Naive thymus-derived CD4-positive, alpha-beta T cell (primary cell): ENCODE measurements at regions of chr5 and their contacts with region 1.

Region 1: GRCh38 chr5:170434966-170435605 is 45.9 kb upstream of the KCNMB1 start:
- DNase-seq: peak; percentile 15 to 61 (median 40)
- ATAC-seq: peak; percentile 88
- H3K4me3 ChIP-seq: no peak overlapping the region
- H3K4me3 Mint-ChIP-seq: no peak overlapping the region
- H3K27ac ChIP-seq: no peak overlapping the region
- H3K27ac Mint-ChIP-seq: no peak overlapping the region
- H3K4me1 ChIP-seq: no peaks in the 10 kb centered on the region
- H3K4me1 Mint-ChIP-seq: no peaks in the 10 kb centered on the region
- H3K27me3 ChIP-seq: no peaks in the 10 kb centered on the region
- H3K27me3 Mint-ChIP-seq: peaks cover 0 to 6% (median 0%) of the 10 kb centered on the region in 5 donors

Region 2: DNA sequence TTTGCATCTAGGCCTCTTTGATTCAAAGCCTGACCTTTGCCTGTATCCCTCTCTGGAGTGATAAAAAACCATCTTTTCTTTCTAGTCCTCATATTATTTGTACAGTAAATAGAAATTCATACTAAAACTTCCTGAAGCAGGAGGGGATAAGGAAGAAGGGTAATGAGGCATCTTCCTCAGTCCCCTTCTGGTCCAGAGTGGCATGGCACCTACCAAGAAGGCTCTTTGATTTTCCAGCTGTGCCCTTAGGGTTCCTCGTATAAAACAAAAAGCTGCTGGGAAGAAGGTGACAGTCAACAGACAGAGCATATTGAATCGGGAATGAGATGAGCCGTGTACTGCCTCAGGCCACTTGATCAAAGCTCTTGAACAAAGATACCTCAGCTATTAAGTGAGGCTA is 923.4 kb before region 1 on chr5:
- CTCF ChIA-PET with region 1: no interaction called
- POLR2A ChIA-PET with region 1: no interaction called
- intact Hi-C with region 1: no loop called
- DNase-seq: no peak
- ATAC-seq: no peak
- H3K4me3 ChIP-seq: no peak overlapping the region
- H3K4me3 Mint-ChIP-seq: no peak overlapping the region
- H3K27ac ChIP-seq: no peak overlapping the region
- H3K27ac Mint-ChIP-seq: no peak overlapping the region
- H3K4me1 ChIP-seq: no peaks in the 10 kb centered on the region
- H3K4me1 Mint-ChIP-seq: no peaks in the 10 kb centered on the region
- H3K27me3 ChIP-seq: no peaks in the 10 kb centered on the region
- H3K27me3 Mint-ChIP-seq: peaks cover 0 to 16% (median 4%) of the 10 kb centered on the region in 5 donors

Region 3: GRCh38 chr5:170623576-170624181 is 188.6 kb after region 1 on chr5:
- CTCF ChIA-PET with region 1: no interaction called
- POLR2A ChIA-PET with region 1: no interaction called
- intact Hi-C with region 1: loop called in 1 of 2 experiments (anchors 1 kb)
- DNase-seq: peak in 1 of 9 donors; percentile 44
- ATAC-seq: no peak
- H3K4me3 ChIP-seq: no peak overlapping the region
- H3K4me3 Mint-ChIP-seq: no peak overlapping the region
- H3K27ac ChIP-seq: no peak overlapping the region
- H3K27ac Mint-ChIP-seq: no peak overlapping the region
- H3K4me1 ChIP-seq: no peaks in the 10 kb centered on the region
- H3K4me1 Mint-ChIP-seq: no peaks in the 10 kb centered on the region
- H3K27me3 ChIP-seq: no peaks in the 10 kb centered on the region
- H3K27me3 Mint-ChIP-seq: peaks cover 0 to 10% (median 4%) of the 10 kb centered on the region in 5 donors